RWPE1 (cell line): ENCODE measurements at regions of chr16 and their contacts with region 1.

Region 1: DNA sequence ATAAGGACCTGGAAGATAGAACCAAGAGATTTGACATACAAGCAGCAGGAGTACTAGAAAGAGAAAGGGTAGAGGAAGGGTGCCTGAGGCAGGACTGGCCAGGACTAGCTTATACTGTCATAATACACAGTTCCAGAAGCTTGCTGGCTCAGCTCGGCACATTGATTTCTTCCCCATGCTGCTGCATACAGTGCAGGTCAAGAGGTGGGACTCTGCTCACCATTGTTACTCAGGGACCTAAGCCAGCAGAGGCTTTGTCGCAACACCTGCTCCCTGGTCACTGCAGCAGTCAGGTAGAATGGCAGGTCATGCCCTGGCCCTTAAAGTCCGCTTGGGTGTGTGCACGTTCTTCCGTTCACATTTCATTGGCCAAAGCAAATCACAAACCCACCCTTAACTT is 32.8 kb downstream of the LDHD start:
- DNase-seq: no peak
- H3K27ac ChIP-seq: no peak overlapping the region
- CTCF ChIP-seq: no peak

Region 2: GRCh38 chr16:75099756-75100602 is 16.2 kb after region 1 on chr16:
- CTCF ChIA-PET with region 1: no interaction called
- POLR2A ChIA-PET with region 1: interaction called, 11 read pairs
- DNase-seq: no peak
- H3K27ac ChIP-seq: peak overlapping the region; percentile 12
- CTCF ChIP-seq: no peak

Region 3: GRCh38 chr16:75116081-75116910 is 32.5 kb after region 1 on chr16 and contains the start of gene LDHD:
- CTCF ChIA-PET with region 1: no interaction called
- POLR2A ChIA-PET with region 1: no interaction called
- DNase-seq: peak; percentile 67
- H3K27ac ChIP-seq: peak within 1 kb of the TSS; percentile 41
- CTCF ChIP-seq: no peak